PC-9 (cell line): ENCODE measurements at regions of chr1 and their contacts with region 1.

Region 1: GRCh38 chr1:85344256-85344694 is 67.8 kb upstream of the BCL10 start:
- DNase-seq: peak; percentile 45 to 47
- H3K4me3 ChIP-seq: no peak overlapping the region
- H3K27ac ChIP-seq: peak overlapping the region; percentile 22; the same call in 1 of the 2 replicates
- H3K4me1 ChIP-seq: peaks cover 24% of the 10 kb centered on the region
- H3K27me3 ChIP-seq: no peaks in the 10 kb centered on the region
- CTCF ChIP-seq: peak; percentile 84

Region 2: DNA sequence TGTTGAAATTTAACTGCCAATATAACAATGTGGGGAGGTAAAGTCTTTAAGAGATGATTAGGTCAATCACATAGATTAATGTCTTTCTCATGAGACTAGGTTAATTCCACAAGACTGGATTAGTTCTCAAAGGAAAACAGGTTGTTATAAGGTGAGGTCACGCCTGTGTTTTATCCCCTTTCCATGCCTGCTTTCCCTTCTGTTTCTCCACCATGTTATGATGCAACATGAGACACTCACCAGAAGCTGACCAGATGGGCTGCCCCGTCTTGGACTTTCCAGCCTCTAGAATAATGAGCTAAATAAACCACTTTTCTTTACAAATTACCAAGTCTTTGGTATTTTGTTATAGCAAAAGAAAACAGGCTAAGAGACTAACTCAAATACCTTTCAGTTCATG is 49.9 kb after region 1 on chr1:
- CTCF ChIA-PET with region 1: no interaction called
- POLR2A ChIA-PET with region 1: no interaction called
- intact Hi-C with region 1: no loop called
- DNase-seq: no peak
- H3K4me3 ChIP-seq: no peak overlapping the region
- H3K27ac ChIP-seq: no peak overlapping the region
- H3K4me1 ChIP-seq: no peaks in the 10 kb centered on the region
- H3K27me3 ChIP-seq: no peaks in the 10 kb centered on the region
- CTCF ChIP-seq: no peak

Region 3: DNA sequence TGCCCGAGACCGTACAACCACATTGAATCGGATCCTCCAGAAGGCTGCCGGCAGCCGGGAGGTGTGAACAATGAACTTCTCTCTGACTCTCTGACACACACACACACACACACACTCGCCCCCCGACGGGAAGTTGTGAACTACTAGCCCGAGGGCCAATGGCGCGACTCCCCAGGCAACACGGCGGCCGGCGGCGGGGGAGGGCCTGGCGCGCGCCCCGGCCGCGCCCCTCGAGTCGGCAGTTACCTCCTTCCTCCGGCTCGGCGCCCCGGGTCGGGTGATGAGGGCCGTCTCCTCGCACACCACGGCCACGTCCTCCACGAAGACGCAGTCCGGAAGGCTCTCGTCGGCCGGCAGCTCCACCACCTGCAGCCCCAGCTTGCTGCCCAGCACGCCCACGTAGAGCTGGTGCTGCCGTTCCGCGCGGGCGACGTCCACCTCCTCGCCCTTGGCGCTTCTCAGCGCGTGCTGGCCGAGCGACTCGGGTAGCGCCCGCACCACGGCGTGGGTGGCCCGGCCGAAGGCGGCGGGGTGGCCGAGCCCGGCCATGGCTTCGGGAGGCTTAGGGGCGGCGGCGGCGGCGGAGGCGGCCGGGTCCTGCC is 120.3 kb after region 1 on chr1:
- CTCF ChIA-PET with region 1: interaction called, 3 read pairs
- POLR2A ChIA-PET with region 1: interaction called, 7 read pairs
- intact Hi-C with region 1: loop called (anchors 1 kb)
- DNase-seq: peak; percentile 48 to 61
- H3K4me3 ChIP-seq: peak overlapping the region; percentile 95
- H3K27ac ChIP-seq: peak overlapping the region; percentile 12; the same call in 1 of the 2 replicates
- H3K4me1 ChIP-seq: peaks cover 41% of the 10 kb centered on the region
- H3K27me3 ChIP-seq: no peaks in the 10 kb centered on the region
- CTCF ChIP-seq: no peak

Region 4: DNA sequence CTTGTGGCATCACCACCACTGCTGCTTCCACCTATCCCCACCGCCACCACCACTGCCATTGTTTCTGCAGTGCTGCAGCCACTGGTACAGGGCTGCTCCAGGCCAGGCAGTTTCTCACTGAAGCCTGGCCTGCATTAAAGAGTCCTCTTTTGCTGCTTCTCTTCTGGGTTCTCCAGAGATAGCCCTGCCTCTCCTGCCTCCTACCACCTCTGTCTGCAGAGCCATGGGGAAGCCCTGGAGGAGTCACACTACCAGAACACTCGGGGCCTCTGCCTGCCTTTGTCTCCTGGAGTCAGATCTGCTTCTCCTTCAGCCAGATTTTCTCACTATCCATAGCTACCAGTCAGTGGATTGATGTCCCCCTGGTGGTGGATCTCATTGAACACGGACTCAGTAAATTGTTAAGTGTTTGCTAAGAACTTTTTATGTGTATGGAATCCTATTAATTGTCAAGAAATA is 158.4 kb after region 1 on chr1:
- CTCF ChIA-PET with region 1: interaction called, 3 read pairs
- POLR2A ChIA-PET with region 1: interaction called, 3 read pairs
- intact Hi-C with region 1: loop called (anchors 1 kb)
- DNase-seq: peak; percentile 35 to 67
- H3K4me3 ChIP-seq: no peak overlapping the region
- H3K27ac ChIP-seq: no peak overlapping the region
- H3K4me1 ChIP-seq: no peaks in the 10 kb centered on the region
- H3K27me3 ChIP-seq: no peaks in the 10 kb centered on the region
- CTCF ChIP-seq: peak; percentile 84